Activated naive CD4-positive, alpha-beta T cell treated with anti-CD3 and anti-CD28 coated beads for 36 hours (primary cell): ENCODE measurements at regions of chr10 and their contacts with region 1.

Region 1: DNA sequence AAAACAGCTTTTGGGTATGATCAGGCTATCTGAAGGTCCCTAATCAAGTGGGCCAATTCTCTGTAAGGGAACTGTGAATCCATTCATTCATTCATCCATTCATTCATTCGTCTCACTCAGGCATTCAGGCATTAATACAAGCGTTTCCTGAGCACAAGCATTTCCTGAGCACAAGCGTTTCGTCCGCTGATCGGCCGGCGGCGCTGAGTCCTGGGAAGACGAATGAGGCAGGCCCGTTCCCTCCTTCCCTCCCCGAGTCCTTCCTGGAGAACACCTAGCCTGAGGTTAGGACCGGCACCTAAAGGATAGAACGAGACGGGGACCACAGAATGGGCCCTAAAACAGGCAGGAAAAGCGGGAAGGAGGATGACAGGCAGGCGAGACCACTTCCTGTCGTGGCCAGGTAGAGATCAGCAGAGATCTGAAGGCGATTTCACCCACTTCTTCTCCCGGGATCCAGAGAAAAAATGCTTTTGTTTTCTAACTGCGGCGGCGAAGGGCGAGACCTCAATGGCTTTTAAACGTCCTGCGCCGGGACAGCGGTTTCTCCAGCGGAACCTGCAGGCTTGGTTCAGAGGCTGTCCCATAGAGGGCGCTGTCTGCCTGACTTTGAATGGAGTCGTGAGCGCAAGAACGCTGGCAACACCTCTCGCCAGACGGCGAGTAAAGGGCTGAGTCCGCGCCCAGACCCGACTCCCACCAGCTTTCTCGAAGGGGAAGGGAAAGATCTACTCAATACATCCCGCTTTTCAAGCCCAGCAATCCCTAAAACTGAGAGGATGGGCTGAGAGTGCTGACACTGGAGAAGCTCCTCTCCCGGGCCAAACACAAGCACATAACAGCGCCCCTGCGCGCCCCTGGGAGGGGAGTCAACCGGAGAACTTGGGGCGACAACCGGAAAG is 2.9 kb upstream of the HMX3 start:
- DNase-seq: peak; percentile 94
- H3K4me3 Mint-ChIP-seq: peak overlapping the region; percentile 44
- H3K27ac Mint-ChIP-seq: peak overlapping the region; percentile 2
- H3K4me1 Mint-ChIP-seq: peaks cover 29% of the 10 kb centered on the region
- H3K27me3 Mint-ChIP-seq: peaks cover 75% of the 10 kb centered on the region

Region 2: DNA sequence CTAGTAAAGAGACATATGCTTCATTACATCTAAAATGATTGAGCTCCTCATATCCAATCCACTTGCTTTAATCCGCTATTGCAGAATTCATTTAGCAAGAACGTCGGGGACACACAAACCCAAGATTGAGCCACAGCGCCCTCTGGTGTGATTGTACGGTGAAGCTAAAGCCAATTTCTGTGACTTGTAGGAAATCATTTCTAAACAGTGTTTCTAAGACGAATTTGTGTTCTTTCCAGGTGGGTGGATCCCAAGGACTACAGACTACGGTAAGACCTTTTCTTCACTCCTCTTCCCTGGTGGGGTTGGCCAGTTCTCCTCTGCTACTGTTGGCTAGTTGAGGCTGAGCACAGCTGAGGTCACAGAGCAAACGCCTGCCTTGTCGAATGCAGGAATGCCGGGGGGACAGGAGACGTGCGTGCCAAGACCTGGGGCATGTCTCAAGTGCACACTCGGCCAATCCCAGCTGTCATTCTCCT is 567.1 kb before region 1 on chr10:
- CTCF ChIA-PET with region 1: no interaction called
- intact Hi-C with region 1: loop called (anchors 5 kb)
- DNase-seq: peak; percentile 86
- H3K4me3 Mint-ChIP-seq: no peak overlapping the region
- H3K27ac Mint-ChIP-seq: no peak overlapping the region
- H3K4me1 Mint-ChIP-seq: peaks cover 11% of the 10 kb centered on the region
- H3K27me3 Mint-ChIP-seq: peaks cover 28% of the 10 kb centered on the region

Region 3: DNA sequence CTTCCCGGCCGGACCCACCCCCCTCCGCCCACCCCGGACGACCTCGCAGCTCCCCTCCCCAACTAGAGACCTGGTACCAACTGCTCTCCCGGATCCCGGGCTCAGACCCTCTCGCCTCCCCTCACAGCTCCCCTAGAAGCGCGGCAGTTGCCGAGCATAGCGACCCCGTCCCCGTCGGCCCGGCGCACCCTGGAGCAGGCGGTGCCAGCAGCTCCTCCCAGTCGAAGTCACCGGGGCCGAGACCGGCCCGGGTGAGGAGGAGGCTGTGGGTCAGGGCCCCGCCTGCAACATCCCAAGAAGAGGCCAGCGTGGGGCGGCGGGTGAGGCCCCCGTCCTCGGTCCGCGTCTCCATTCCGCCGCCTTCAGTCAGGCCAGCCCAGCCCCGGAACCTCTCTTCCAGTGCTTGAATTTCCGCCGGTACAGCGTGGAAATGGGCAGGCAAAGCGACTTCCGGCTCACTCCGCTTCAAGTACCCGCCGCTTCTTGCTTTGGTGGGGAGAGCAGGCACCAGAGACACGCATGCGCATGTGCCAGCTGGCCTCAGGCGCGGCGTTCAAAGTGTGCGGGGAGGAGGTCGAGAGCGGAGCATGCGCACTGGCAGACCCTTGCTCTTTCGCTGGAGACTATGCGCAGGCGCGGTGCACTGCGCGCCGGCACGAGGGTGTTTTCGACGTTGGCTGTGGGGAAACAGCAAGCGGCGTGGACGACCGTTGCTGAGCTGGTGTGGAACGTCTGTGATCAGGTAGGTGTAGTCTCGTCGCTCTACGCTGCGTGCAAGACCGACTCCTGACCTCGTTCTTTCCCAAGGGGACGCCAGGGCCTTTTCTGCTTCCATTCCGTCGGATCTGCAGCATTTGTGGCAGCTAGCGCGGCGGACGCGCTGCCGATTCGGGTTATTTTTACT is 178.7 kb before region 1 on chr10 and contains the start of gene C10orf88:
- CTCF ChIA-PET with region 1: no interaction called
- intact Hi-C with region 1: loop called (anchors 5 kb)
- DNase-seq: peak; percentile 97
- H3K4me3 Mint-ChIP-seq: peak within 1 kb of the TSS; percentile 81
- H3K27ac Mint-ChIP-seq: peak within 1 kb of the TSS; percentile 82
- H3K4me1 Mint-ChIP-seq: peaks cover 28% of the 10 kb centered on the region
- H3K27me3 Mint-ChIP-seq: no peaks in the 10 kb centered on the region
- total RNA-seq, gene C10orf88: 4.2 to 5.2 TPM

Region 4: GRCh38 chr10:123043409-123043925 is 89.4 kb before region 1 on chr10:
- CTCF ChIA-PET with region 1: interaction called, 3 read pairs
- intact Hi-C with region 1: loop called (anchors 1 kb)
- DNase-seq: peak; percentile 60
- H3K4me3 Mint-ChIP-seq: no peak overlapping the region
- H3K27ac Mint-ChIP-seq: no peak overlapping the region
- H3K4me1 Mint-ChIP-seq: peaks cover 3% of the 10 kb centered on the region
- H3K27me3 Mint-ChIP-seq: no peaks in the 10 kb centered on the region

Region 5: GRCh38 chr10:123092635-123093414 is 40.0 kb before region 1 on chr10:
- CTCF ChIA-PET with region 1: no interaction called
- intact Hi-C with region 1: no loop called
- DNase-seq: no peak
- H3K4me3 Mint-ChIP-seq: no peak overlapping the region
- H3K27ac Mint-ChIP-seq: no peak overlapping the region
- H3K4me1 Mint-ChIP-seq: no peaks in the 10 kb centered on the region
- H3K27me3 Mint-ChIP-seq: peaks cover 7% of the 10 kb centered on the region

Region 6: DNA sequence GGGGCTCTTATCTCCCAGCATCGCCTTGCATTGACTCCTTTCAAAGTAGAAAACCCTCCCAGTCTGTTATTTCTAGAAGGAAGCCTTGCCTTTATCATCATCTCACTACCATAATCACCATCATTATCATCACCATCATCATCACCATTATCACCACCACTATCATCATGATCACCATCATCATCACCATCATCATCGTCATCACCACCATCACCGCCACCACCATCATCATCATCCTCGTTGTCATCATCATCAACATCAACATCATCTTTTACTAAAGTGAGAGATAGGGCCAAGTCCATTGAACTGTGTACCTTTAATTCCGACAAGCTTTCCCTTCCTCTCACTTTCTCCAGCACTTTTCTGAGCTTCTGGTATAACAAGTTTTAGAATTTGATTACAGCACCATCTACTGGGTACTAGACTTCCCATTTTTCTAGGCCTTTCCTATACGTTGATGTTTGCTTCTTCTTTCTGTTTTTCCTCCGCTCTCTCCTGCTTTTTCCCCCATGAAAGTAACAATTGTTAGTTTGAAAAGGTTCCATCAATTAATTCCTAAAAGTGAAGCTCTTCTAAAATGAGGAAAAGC is 247.8 kb after region 1 on chr10:
- CTCF ChIA-PET with region 1: interaction called, 12 read pairs
- intact Hi-C with region 1: loop called (anchors 1 kb)
- DNase-seq: no peak
- H3K4me3 Mint-ChIP-seq: no peak overlapping the region
- H3K27ac Mint-ChIP-seq: no peak overlapping the region
- H3K4me1 Mint-ChIP-seq: no peaks in the 10 kb centered on the region
- H3K27me3 Mint-ChIP-seq: no peaks in the 10 kb centered on the region

Region 7: GRCh38 chr10:123559066-123559822 is 426.4 kb after region 1 on chr10:
- CTCF ChIA-PET with region 1: interaction called, 5 read pairs
- intact Hi-C with region 1: loop called (anchors 1 kb)
- DNase-seq: peak; percentile 72
- H3K4me3 Mint-ChIP-seq: no peak overlapping the region
- H3K27ac Mint-ChIP-seq: no peak overlapping the region
- H3K4me1 Mint-ChIP-seq: no peaks in the 10 kb centered on the region
- H3K27me3 Mint-ChIP-seq: peaks cover 19% of the 10 kb centered on the region